ENCODE measurements at regions of chr1 and their contacts with region 1.

Region 1: DNA sequence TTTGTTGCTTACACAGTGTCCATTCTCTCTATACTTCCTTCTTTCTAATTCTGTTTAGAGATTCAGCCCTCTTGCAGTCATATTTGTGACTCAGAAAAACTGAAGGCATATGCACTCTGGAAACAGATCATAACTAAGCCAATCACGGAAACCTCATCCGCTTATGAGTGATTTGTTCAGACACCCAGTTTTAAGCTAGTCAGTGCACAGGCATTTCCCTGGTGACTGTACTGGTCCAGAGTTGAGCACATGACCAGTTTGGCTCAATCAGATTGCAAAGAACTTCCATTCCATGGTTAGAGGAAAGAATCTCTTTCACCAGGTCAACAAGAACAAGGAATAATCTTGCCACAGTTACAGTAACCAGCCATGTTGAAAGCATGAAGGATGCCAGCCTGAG is 69.2 kb upstream of the SGIP1 start:
- DNase-seq: no peak
- H3K4me3 ChIP-seq: no peak overlapping the region
- H3K4me1 ChIP-seq: no peaks in the 10 kb centered on the region
- H3K27me3 ChIP-seq: peaks cover 7% of the 10 kb centered on the region; the same call in 1 of the 2 replicates

Region 2: GRCh38 chr1:65948609-65949229 is 516.1 kb before region 1 on chr1:
- in situ Hi-C with region 1: loop called (anchors 25 kb)
- DNase-seq: no peak
- H3K4me3 ChIP-seq: no peak overlapping the region
- H3K4me1 ChIP-seq: no peaks in the 10 kb centered on the region
- H3K27me3 ChIP-seq: no peaks in the 10 kb centered on the region

Measured in HAP-1 (cell line).